GM13977 (cell line): ENCODE measurements at regions of chr19 and their contacts with region 1.

Region 1: GRCh38 chr19:52942386-52943133 is 19.3 kb upstream of the ZNF888 start:
- DNase-seq: peak; percentile 94
- CTCF ChIP-seq: no peak

Region 2: GRCh38 chr19:52778811-52779210 is 163.7 kb before region 1 on chr19:
- in situ Hi-C with region 1: no loop called
- DNase-seq: peak; percentile 9
- CTCF ChIP-seq: no peak

Region 3: GRCh38 chr19:52809801-52810200 is 132.8 kb before region 1 on chr19:
- in situ Hi-C with region 1: no loop called
- DNase-seq: no peak
- CTCF ChIP-seq: no peak

Region 4: GRCh38 chr19:52853880-52854279 is 88.7 kb before region 1 on chr19:
- in situ Hi-C with region 1: loop called (anchors 10 kb)
- DNase-seq: no peak
- CTCF ChIP-seq: no peak